ENCODE measurements at regions of chr11 and their contacts with region 1.

Region 1: GRCh38 chr11:67277231-67277961 is 11.1 kb downstream of the GRK2 start:
- DNase-seq: peak; percentile 80 to 88 (median 83)
- H3K4me3 ChIP-seq: peak overlapping the region; percentile 15
- H3K27ac ChIP-seq: peak overlapping the region; percentile 67 to 81
- H3K4me1 ChIP-seq: peaks cover 44% of the 10 kb centered on the region
- H3K27me3 ChIP-seq: no peaks in the 10 kb centered on the region
- CTCF ChIP-seq: no peak
- EP300 ChIP-seq: no peak
- POLR2A ChIP-seq: no peak

Region 2: GRCh38 chr11:67262731-67263675 is 14.4 kb before region 1 on chr11:
- intact Hi-C with region 1: no loop called
- DNase-seq: peak; percentile 75 to 86 (median 85)
- H3K4me3 ChIP-seq: no peak overlapping the region
- H3K27ac ChIP-seq: no peak overlapping the region
- H3K4me1 ChIP-seq: peaks cover 14% of the 10 kb centered on the region
- H3K27me3 ChIP-seq: no peaks in the 10 kb centered on the region
- CTCF ChIP-seq: peak; percentile 70 to 80 (median 73)
- EP300 ChIP-seq: no peak
- POLR2A ChIP-seq: no peak

Region 3: DNA sequence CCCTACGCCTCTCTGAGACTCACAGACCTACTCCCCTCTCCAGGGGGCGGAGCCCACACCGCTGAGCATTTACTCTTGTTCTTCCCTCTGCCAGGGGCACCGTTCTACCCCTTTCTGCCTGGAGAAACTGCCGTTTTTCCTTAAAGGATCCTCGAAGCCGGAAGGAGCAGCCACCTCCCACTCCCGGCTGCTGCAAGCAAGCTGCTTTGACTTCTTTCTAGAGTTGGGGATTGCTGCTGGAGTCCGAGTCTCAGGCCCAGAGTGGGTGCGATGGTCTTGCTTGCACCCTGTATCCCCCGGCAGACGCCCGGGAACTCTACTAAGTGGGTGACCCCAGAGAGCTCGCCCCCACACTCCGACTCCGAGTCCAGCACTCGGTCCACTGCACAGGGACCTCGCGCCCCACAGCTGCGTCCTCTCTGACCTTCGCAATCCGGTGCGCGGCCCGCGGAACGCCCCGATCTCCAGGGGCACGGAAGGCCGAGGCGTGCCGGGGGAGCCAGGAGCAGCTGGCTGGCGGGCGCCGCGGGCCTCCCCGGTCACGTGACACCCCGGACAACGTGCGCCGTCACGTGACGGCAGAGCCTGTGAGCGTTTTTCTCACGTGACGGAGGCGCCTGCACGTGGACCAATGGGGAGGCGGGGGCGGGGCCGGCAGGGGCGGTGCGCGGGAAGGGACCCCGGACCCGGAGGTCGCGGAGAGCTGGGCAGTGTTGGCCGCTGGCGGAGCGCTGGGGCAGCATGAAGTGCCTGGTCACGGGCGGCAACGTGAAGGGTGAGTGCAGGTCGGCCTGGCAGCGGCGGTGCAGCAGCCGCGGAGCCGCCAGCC is 114.1 kb after region 1 on chr11 and contains the start of gene RAD9A:
- intact Hi-C with region 1: loop called in 1 of 4 experiments (anchors 10 kb)
- DNase-seq: peak; percentile 94 to 97 (median 95)
- H3K4me3 ChIP-seq: peak within 1 kb of the TSS; percentile 56
- H3K27ac ChIP-seq: peak within 1 kb of the TSS; percentile 62 to 73
- H3K4me1 ChIP-seq: peaks cover 3% of the 10 kb centered on the region
- H3K27me3 ChIP-seq: no peaks in the 10 kb centered on the region
- CTCF ChIP-seq: peak in 1 of 3 donors; percentile 37
- EP300 ChIP-seq: peak; percentile 71
- POLR2A ChIP-seq: peak; percentile 29
- total RNA-seq, gene RAD9A: 13.9 to 51.7 (median 23.5) TPM